MCF 10A (cell line): ENCODE measurements at regions of chr3 and their contacts with region 1.

Region 1: DNA sequence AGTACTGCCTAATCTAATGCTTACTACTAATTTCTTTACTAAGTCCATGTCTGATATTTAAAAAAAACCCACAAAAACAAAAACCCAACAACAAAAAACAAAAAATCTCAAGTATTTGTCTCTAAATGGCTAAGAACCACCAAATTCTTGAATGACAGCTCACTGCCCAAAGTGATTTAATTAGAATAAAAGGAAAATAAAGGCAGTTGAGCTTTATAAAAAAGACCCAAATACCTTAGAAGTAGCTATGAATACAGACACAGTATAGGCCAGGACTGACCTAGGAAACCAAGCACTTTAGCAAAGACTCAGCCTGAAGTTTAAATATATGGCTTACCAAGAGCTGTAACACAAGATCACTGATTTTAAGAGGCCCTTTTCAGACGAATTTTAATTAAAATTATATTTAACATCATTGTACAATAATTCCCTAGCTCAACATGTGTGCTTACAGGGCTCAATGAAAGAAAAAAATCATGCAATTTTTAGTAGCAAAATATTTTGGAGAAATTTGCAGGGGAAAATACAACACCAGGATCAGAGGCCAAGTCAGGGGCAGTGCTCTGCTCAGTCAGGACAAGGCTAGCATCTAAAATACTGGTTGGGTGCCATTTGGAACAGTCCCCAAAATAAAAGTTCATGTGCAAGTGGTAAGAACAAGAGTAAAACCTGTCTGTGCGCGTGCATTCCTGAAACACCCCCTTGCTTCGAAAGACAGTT is 24.8 kb downstream of the UQCC5 start:
- DNase-seq: no peak
- H3K4me3 Mint-ChIP-seq: no peak overlapping the region
- H3K27ac Mint-ChIP-seq: no peak overlapping the region
- H3K4me1 Mint-ChIP-seq: no peaks in the 10 kb centered on the region
- H3K27me3 Mint-ChIP-seq: no peaks in the 10 kb centered on the region
- CTCF ChIP-seq: no peak

Region 2: DNA sequence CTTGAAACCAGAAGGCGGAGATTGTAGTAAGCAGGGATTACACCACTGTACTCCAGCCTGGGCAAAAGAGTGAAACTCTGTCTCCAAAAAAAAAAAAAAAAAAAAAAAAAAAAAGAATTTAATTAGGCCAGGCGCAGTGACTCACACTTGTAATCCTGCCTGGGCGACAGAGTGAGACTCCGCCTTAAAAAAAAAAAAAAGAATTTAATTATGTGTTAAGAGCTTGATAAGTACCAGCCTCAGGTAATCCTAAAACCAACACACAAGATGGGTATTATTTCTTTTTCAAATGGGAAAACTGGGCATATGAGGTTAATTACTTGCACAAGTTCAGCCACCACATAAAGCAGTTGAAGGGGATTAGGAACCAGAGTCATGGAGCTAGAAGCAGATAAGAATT is 75.5 kb after region 1 on chr3:
- CTCF ChIA-PET with region 1: no interaction called
- POLR2A ChIA-PET with region 1: no interaction called
- intact Hi-C with region 1: loop called (anchors 10 kb)
- DNase-seq: peak; percentile 78
- H3K4me3 Mint-ChIP-seq: no peak overlapping the region
- H3K27ac Mint-ChIP-seq: no peak overlapping the region
- H3K4me1 Mint-ChIP-seq: peaks cover 5% of the 10 kb centered on the region
- H3K27me3 Mint-ChIP-seq: no peaks in the 10 kb centered on the region
- CTCF ChIP-seq: no peak